CD8-positive, alpha-beta T cell (primary cell): ENCODE measurements at regions of chr16 and their contacts with region 1.

Region 1: GRCh38 chr16:67935402-67936123 is 1.1 kb downstream of the PSMB10 start:
- DNase-seq: peak; percentile 89 to 98 (median 94)
- ATAC-seq: peak; percentile 90
- H3K4me3 ChIP-seq: peak overlapping the region; percentile 94 to 100
- H3K4me3 Mint-ChIP-seq: peak overlapping the region; percentile 100
- H3K27ac ChIP-seq: peak overlapping the region; percentile 72 to 73
- H3K27ac Mint-ChIP-seq: peak overlapping the region; percentile 98
- H3K4me1 ChIP-seq: peaks cover 38% of the 10 kb centered on the region
- H3K4me1 Mint-ChIP-seq: peaks cover 37% of the 10 kb centered on the region
- H3K27me3 ChIP-seq: no peaks in the 10 kb centered on the region
- H3K27me3 Mint-ChIP-seq: no peaks in the 10 kb centered on the region
- CTCF ChIP-seq: no peak

Region 2: GRCh38 chr16:67480833-67481560 is 454.6 kb before region 1 on chr16 and contains the start of gene ATP6V0D1:
- CTCF ChIA-PET with region 1: no interaction called
- POLR2A ChIA-PET with region 1: no interaction called
- intact Hi-C with region 1: loop called (anchors 1 to 10 kb)
- DNase-seq: peak; percentile 98 to 99 (median 99)
- ATAC-seq: peak; percentile 90
- H3K4me3 ChIP-seq: peak within 1 kb of the TSS; percentile 91 to 100
- H3K4me3 Mint-ChIP-seq: peak within 1 kb of the TSS; percentile 99
- H3K27ac ChIP-seq: peak within 1 kb of the TSS; percentile 96 to 100
- H3K27ac Mint-ChIP-seq: peak within 1 kb of the TSS; percentile 99
- H3K4me1 ChIP-seq: peaks cover 30% of the 10 kb centered on the region
- H3K4me1 Mint-ChIP-seq: peaks cover 49% of the 10 kb centered on the region
- H3K27me3 ChIP-seq: no peaks in the 10 kb centered on the region
- H3K27me3 Mint-ChIP-seq: no peaks in the 10 kb centered on the region
- CTCF ChIP-seq: peak; percentile 87
- total RNA-seq, gene ATP6V0D1: 56.3 to 62.0 TPM

Region 3: DNA sequence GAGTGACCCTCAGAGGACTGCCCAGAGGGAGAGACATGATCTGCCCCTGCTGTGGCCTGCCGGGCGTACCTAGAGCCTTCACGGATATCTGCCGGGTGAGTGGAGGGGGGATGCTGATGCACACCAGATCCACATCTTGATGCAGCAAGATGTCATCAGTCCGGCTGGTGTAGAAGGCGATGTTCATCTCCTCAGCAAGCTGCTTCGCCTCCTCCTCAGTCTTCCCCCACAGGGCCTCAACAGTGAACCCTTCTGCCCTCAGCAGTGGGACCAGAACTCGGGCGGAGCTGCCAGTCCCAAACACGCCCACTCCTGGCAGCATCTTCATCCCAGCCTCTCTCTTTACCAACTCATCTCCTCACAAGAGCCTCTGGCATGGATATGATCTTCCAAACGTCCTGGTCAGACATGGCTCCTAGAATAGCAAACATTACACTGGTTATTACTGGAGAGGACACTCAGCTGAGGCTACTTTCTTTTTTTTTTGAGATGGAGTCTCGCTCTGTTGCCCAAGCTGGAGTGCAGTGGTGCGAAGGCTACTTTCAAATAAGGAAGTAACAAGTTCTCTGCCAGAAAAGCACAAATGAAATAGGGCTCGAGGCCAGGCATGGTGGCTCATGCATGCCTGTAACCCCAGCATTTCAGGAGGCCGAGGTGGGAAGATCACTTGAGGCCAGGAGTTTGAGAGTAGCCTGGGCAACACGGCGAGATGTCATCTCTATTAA is 250.0 kb before region 1 on chr16:
- CTCF ChIA-PET with region 1: no interaction called
- POLR2A ChIA-PET with region 1: no interaction called
- intact Hi-C with region 1: no loop called
- DNase-seq: no peak
- ATAC-seq: no peak
- H3K4me3 ChIP-seq: no peak overlapping the region
- H3K4me3 Mint-ChIP-seq: no peak overlapping the region
- H3K27ac ChIP-seq: no peak overlapping the region
- H3K27ac Mint-ChIP-seq: no peak overlapping the region
- H3K4me1 ChIP-seq: no peaks in the 10 kb centered on the region
- H3K4me1 Mint-ChIP-seq: peaks cover 2% of the 10 kb centered on the region
- H3K27me3 ChIP-seq: no peaks in the 10 kb centered on the region
- H3K27me3 Mint-ChIP-seq: no peaks in the 10 kb centered on the region
- CTCF ChIP-seq: no peak

Region 4: DNA sequence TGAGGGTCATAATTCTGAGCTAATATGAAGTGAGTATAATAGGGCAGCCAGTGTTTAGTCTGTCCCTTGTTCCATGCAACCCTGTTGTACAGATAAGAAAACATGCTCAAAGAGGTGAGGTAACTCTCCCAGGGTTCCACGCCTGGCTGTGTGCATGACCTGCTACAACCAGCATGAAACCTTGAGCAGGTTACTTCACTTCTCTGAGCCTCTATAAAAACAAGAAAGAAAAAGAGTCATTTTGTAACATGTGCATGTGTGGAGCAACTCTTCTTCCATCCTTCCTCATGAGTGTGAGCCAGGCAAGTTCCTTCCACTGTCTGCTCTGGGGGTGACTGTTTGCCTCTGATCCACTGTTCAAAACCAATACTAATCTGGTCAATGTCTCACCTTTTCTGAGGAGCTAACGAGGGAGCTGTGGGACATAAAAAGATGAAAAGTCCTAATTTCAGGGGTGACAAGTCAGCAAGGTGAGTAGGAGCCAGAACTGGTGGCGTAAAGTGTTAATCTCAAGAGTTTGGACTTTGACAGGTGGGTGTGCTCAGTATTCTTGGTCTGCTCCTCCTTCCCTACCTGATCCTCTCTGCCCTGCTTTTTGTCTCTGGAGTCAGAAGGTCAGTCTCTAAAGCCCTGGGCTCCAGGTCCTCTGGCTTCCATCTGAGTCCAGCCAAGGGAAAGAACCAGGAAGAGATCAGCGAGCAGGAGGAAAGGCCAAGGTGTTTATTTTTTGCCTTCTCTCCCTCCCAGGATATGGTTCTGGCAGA is 238.0 kb before region 1 on chr16:
- CTCF ChIA-PET with region 1: no interaction called
- POLR2A ChIA-PET with region 1: no interaction called
- intact Hi-C with region 1: no loop called
- DNase-seq: no peak
- ATAC-seq: no peak
- H3K4me3 ChIP-seq: no peak overlapping the region
- H3K4me3 Mint-ChIP-seq: no peak overlapping the region
- H3K27ac ChIP-seq: no peak overlapping the region
- H3K27ac Mint-ChIP-seq: no peak overlapping the region
- H3K4me1 ChIP-seq: no peaks in the 10 kb centered on the region
- H3K4me1 Mint-ChIP-seq: no peaks in the 10 kb centered on the region
- H3K27me3 ChIP-seq: no peaks in the 10 kb centered on the region
- H3K27me3 Mint-ChIP-seq: no peaks in the 10 kb centered on the region
- CTCF ChIP-seq: no peak

Region 5: GRCh38 chr16:67806428-67807147 is 129.0 kb before region 1 on chr16 and contains the starts of genes RANBP10 and TSNAXIP1:
- CTCF ChIA-PET with region 1: interaction called, 3 read pairs
- POLR2A ChIA-PET with region 1: interaction called, 5 read pairs
- intact Hi-C with region 1: loop called (anchors 1 to 5 kb)
- DNase-seq: peak; percentile 92 to 99 (median 94)
- ATAC-seq: peak; percentile 91
- H3K4me3 ChIP-seq: peak within 1 kb of the TSS; percentile 89 to 96
- H3K4me3 Mint-ChIP-seq: peak within 1 kb of the TSS; percentile 95
- H3K27ac ChIP-seq: peak within 1 kb of the TSS; percentile 77 to 85
- H3K27ac Mint-ChIP-seq: peak within 1 kb of the TSS; percentile 91
- H3K4me1 ChIP-seq: peaks cover 35% of the 10 kb centered on the region
- H3K4me1 Mint-ChIP-seq: peaks cover 44% of the 10 kb centered on the region
- H3K27me3 ChIP-seq: no peaks in the 10 kb centered on the region
- H3K27me3 Mint-ChIP-seq: no peaks in the 10 kb centered on the region
- CTCF ChIP-seq: no peak
- total RNA-seq, gene RANBP10: 14.6 to 14.8 TPM
- total RNA-seq, gene TSNAXIP1: 0.31 to 0.41 TPM

Region 6: GRCh38 chr16:67822511-67822910 is 113.1 kb before region 1 on chr16:
- CTCF ChIA-PET with region 1: no interaction called
- POLR2A ChIA-PET with region 1: no interaction called
- intact Hi-C with region 1: no loop called
- DNase-seq: no peak
- ATAC-seq: no peak
- H3K4me3 ChIP-seq: no peak overlapping the region
- H3K4me3 Mint-ChIP-seq: no peak overlapping the region
- H3K27ac ChIP-seq: no peak overlapping the region
- H3K27ac Mint-ChIP-seq: no peak overlapping the region
- H3K4me1 ChIP-seq: no peaks in the 10 kb centered on the region
- H3K4me1 Mint-ChIP-seq: no peaks in the 10 kb centered on the region
- H3K27me3 ChIP-seq: no peaks in the 10 kb centered on the region
- H3K27me3 Mint-ChIP-seq: no peaks in the 10 kb centered on the region
- CTCF ChIP-seq: no peak

Region 7: DNA sequence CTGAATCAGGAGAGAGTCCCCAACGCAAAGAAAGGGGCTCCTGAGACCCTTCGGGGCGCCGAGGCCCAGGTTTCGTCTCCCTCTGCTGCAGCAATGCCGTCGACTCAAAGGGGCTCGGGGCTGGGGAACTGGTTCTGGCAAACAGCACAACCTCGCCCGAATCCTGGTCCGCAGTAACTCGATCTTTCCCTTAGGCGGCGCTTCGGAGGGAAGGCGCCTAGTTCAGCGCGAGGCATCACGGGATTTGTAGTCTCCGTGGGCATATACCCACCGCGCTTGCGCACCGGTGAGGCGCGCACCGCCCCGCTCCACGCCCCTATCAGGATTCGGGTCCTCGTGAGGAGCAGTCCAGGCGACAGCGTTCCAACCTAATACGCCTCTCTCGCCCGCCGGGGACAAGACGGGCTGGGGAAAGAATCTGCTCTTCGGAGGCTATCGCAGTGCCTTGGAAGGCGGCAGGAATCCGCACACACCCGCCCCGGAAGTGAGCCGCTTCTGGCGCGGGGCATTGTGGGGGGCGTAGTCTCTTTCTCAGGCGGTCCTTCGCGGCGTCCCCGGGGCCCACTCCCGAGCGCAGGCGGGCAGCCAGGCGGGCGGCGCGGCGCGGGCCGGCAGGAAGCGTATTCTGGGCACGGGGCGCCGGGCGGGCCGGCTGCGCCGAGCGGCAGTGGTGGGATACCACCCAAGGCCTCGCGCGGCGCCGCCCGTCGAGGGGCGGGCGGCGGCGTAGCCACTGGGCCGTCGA is 93.6 kb before region 1 on chr16 and contains the start of gene THAP11:
- CTCF ChIA-PET with region 1: interaction called, 4 read pairs
- POLR2A ChIA-PET with region 1: interaction called, 5 read pairs
- intact Hi-C with region 1: loop called in 1 of 2 experiments (anchors 2 kb)
- DNase-seq: peak; percentile 91 to 97 (median 94)
- ATAC-seq: peak; percentile 62
- H3K4me3 ChIP-seq: peak within 1 kb of the TSS; percentile 97 to 100
- H3K4me3 Mint-ChIP-seq: peak within 1 kb of the TSS; percentile 95
- H3K27ac ChIP-seq: peak within 1 kb of the TSS; percentile 53 to 99
- H3K27ac Mint-ChIP-seq: peak within 1 kb of the TSS; percentile 96
- H3K4me1 ChIP-seq: peaks cover 39% of the 10 kb centered on the region
- H3K4me1 Mint-ChIP-seq: peaks cover 41% of the 10 kb centered on the region
- H3K27me3 ChIP-seq: no peaks in the 10 kb centered on the region
- H3K27me3 Mint-ChIP-seq: no peaks in the 10 kb centered on the region
- CTCF ChIP-seq: peak; percentile 79
- total RNA-seq, gene THAP11: 25.1 to 26.0 TPM

Region 8: DNA sequence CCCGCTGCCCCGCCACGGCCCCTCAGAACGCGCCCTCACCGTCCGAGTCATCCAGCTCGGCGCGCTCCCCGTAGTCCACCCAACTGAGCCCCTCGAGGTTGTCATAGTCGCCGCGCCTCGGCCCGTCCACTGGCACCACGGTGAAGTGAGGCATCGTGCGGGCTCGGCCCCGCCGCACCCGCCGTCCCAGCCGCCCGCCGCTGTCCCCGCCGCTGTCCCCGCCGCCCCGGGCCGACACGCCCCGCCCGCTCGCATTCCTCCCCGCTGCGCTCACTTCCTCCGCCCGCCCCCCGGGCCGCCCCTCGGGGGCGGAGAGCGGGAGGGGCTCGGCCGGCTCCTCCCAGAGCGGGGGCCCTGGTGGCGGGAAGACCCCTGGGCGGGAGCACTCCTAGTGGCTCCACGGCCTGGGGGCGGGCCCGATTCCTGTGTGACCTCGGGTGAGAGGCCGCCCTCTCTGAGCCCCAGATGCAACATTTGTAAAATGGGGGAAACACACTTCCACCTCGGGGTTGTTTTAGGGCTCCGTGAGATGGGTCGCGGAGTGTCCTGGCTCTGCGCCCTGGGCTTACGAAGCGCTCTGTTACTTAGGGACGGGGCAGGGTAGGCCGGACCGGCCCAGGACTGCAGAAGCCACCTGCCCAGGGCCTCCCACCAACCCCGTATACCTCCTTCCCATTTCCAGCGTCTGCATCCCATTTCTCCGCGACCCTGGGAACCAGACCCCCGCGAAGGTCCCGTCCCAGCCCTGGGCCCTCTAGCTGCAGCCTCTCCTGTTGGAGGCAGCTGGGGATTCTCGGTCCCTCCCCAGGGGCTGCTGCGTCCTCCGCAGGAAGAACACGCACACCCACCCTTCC is 33.1 kb after region 1 on chr16 and contains the start of gene SLC12A4:
- CTCF ChIA-PET with region 1: interaction called, 9 read pairs
- POLR2A ChIA-PET with region 1: interaction called, 8 read pairs
- intact Hi-C with region 1: loop called (anchors 1 kb)
- DNase-seq: peak; percentile 66 to 93 (median 86)
- ATAC-seq: peak; percentile 90
- H3K4me3 ChIP-seq: peak within 1 kb of the TSS; percentile 78 to 97
- H3K4me3 Mint-ChIP-seq: peak within 1 kb of the TSS; percentile 83
- H3K27ac ChIP-seq: peak within 1 kb of the TSS; percentile 44 to 59
- H3K27ac Mint-ChIP-seq: peak within 1 kb of the TSS; percentile 94
- H3K4me1 ChIP-seq: peaks cover 15% of the 10 kb centered on the region
- H3K4me1 Mint-ChIP-seq: peaks cover 21% of the 10 kb centered on the region
- H3K27me3 ChIP-seq: no peaks in the 10 kb centered on the region
- H3K27me3 Mint-ChIP-seq: no peaks in the 10 kb centered on the region
- CTCF ChIP-seq: no peak
- total RNA-seq, gene SLC12A4: 20.1 to 20.7 TPM

Region 9: GRCh38 chr16:68022704-68023522 is 87.3 kb after region 1 on chr16 and contains the starts of genes DDX28 and DUS2:
- CTCF ChIA-PET with region 1: no interaction called
- POLR2A ChIA-PET with region 1: interaction called, 5 read pairs
- intact Hi-C with region 1: loop called in 1 of 2 experiments (anchors 1 kb)
- DNase-seq: peak; percentile 89 to 98 (median 94)
- ATAC-seq: peak; percentile 95
- H3K4me3 ChIP-seq: peak within 1 kb of the TSS; percentile 92 to 97
- H3K4me3 Mint-ChIP-seq: peak within 1 kb of the TSS; percentile 98
- H3K27ac ChIP-seq: peak within 1 kb of the TSS; percentile 86 to 88
- H3K27ac Mint-ChIP-seq: peak within 1 kb of the TSS; percentile 95
- H3K4me1 ChIP-seq: peaks cover 28% of the 10 kb centered on the region
- H3K4me1 Mint-ChIP-seq: peaks cover 36% of the 10 kb centered on the region
- H3K27me3 ChIP-seq: no peaks in the 10 kb centered on the region
- H3K27me3 Mint-ChIP-seq: no peaks in the 10 kb centered on the region
- CTCF ChIP-seq: no peak
- total RNA-seq, gene DDX28: 18.5 to 20.9 TPM
- total RNA-seq, gene DUS2: 9.5 TPM

Region 10: DNA sequence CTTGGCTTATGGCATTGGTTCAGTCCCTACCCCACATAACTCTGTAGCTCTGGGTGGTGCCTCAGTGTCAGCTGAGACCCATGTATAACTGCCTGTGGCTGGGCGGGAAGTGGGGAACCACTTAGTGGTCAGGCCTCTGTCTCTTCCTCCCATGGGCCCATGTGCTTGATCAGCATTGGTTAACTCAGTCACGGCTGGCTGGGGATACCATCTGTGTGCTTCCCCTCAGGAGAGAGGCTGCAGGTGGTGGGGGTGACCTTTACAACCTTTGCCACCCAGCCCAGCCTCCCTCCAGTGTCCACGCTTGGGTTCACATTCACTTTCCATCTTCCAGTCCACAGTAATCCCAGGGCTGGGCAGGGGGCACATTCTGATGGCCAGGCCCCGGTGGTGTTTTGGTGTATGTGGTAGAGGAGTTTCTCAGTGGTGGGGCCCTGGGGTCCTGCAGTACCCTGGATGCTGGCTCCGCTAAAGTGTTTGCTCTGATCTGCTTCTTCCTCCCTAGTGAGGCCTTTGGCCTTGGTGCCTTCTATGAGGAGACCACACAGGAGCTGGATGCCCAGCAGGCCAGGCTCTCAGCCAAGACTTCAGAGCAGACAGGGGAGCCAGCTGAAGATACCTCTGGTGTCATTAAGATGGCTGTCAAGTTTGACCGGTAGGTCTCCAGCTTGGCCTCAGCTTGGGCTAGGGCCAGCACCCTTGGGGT is 139.4 kb after region 1 on chr16:
- CTCF ChIA-PET with region 1: no interaction called
- POLR2A ChIA-PET with region 1: no interaction called
- intact Hi-C with region 1: no loop called
- DNase-seq: peak in 8 of 9 experiments; percentile 58 to 85 (median 77)
- ATAC-seq: peak; percentile 69
- H3K4me3 ChIP-seq: peak overlapping the region; percentile 1 to 19
- H3K4me3 Mint-ChIP-seq: peak overlapping the region; percentile 76
- H3K27ac ChIP-seq: peak overlapping the region in 1 of 2 experiments; percentile 64
- H3K27ac Mint-ChIP-seq: peak overlapping the region; percentile 92
- H3K4me1 ChIP-seq: peaks cover 92% of the 10 kb centered on the region
- H3K4me1 Mint-ChIP-seq: peaks cover 87% of the 10 kb centered on the region
- H3K27me3 ChIP-seq: no peaks in the 10 kb centered on the region
- H3K27me3 Mint-ChIP-seq: no peaks in the 10 kb centered on the region
- CTCF ChIP-seq: no peak

Region 11: DNA sequence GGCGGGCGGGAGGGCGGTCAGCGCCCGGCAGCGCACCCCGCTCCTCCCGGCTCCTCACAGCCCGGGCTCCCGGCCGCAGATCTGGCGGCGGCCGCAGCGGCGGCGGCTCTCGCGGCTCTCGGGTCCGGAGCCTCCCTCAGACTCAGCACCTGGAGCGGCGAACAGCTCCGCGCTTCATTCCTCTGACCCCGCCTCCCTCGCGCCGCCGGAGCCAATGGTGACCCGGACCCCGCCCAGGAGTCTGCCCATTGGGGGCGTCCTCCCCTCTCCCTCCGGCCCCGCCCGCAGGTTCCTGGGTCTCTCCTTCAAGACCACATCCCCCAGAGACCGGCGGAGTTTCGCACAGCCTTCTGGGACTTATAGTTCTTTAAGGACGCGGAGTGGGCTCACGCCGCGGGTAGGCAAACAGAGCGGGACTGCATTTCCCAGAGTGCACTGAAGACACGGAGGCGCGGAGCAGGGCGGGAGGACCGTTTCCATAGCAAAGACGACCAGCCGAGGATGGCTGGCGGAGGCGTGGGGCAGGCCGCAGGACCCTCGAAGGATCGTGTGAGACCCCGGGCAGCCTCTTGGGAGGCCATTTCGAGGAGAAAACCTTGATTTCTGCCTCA is 512.9 kb after region 1 on chr16 and contains the start of gene SMPD3:
- CTCF ChIA-PET with region 1: no interaction called
- POLR2A ChIA-PET with region 1: no interaction called
- intact Hi-C with region 1: loop called in 1 of 2 experiments (anchors 2 kb)
- DNase-seq: peak; percentile 96 to 99 (median 98)
- ATAC-seq: peak; percentile 98
- H3K4me3 ChIP-seq: peak within 1 kb of the TSS; percentile 46 to 49
- H3K4me3 Mint-ChIP-seq: peak within 1 kb of the TSS; percentile 68
- H3K27ac ChIP-seq: peak within 1 kb of the TSS in 1 of 2 experiments; percentile 37
- H3K27ac Mint-ChIP-seq: no peak within 1 kb of the TSS
- H3K4me1 ChIP-seq: peaks cover 26% of the 10 kb centered on the region
- H3K4me1 Mint-ChIP-seq: peaks cover 21% of the 10 kb centered on the region
- H3K27me3 ChIP-seq: peaks cover 18 to 25% of the 10 kb centered on the region in 2 experiments
- H3K27me3 Mint-ChIP-seq: peaks cover 24% of the 10 kb centered on the region
- CTCF ChIP-seq: no peak
- total RNA-seq, gene SMPD3: 0.24 to 0.25 TPM